Tibial artery (tissue), 4 donors: ENCODE measurements at regions of chr10 and their contacts with region 1.

Region 1: GRCh38 chr10:78148961-78149610 is 115.4 kb downstream of the RPS24 start:
- DNase-seq: no peak
- H3K4me3 ChIP-seq: no peak overlapping the region
- H3K27ac ChIP-seq: no peak overlapping the region
- H3K4me1 ChIP-seq: peaks cover 0 to 5% (median 0%) of the 10 kb centered on the region in 4 donors
- H3K27me3 ChIP-seq: no peaks in the 10 kb centered on the region
- CTCF ChIP-seq: no peak

Region 2: DNA sequence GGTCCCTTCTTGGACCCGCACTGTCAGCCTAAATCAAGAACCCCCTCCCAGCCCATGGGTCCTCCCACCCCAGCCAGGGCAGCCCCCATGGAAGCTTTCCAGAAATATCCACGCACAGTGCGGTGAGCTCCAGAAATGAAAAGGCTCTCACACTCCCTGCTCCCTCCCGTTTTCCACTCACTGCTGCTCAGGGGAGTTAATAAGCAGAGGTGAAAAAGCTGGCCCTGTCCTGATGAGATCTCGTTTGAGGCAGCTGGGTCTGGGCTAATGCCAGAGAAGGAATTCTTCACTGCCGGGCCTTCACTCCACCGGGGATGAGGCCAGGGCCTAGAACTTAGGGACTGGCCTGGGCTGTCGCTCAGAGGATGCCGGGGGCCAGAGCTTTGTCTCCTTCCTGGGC is 1021.9 kb after region 1 on chr10:
- intact Hi-C with region 1: loop called (anchors 5 kb)
- DNase-seq: no peak
- H3K4me3 ChIP-seq: no peak overlapping the region
- H3K27ac ChIP-seq: no peak overlapping the region
- H3K4me1 ChIP-seq: peaks cover 0 to 13% (median 8%) of the 10 kb centered on the region in 4 donors
- H3K27me3 ChIP-seq: no peaks in the 10 kb centered on the region
- CTCF ChIP-seq: no peak